ENCODE measurements at regions of chr18 and their contacts with region 1.

Region 1: GRCh38 chr18:36095936-36096519 is 28.7 kb upstream of the RPRD1A start:
- DNase-seq: peak; percentile 41 to 74 (median 52)
- ATAC-seq: peak; percentile 67
- H3K4me3 ChIP-seq: no peak overlapping the region
- H3K27ac ChIP-seq: no peak overlapping the region
- H3K4me1 ChIP-seq: no peaks in the 10 kb centered on the region; a peak in 1 of 5 replicates
- H3K27me3 ChIP-seq: peaks cover 5 to 8% of the 10 kb centered on the region in 2 experiments; a peak in 3 of 5 replicates
- CTCF ChIP-seq: peak; percentile 38 to 88 (median 57); a peak in 3 of 6 replicates
- EP300 ChIP-seq: no peak
- POLR2A ChIP-seq: no peak
- RAD21 ChIP-seq: peak; percentile 89 to 95

Region 2: GRCh38 chr18:36015629-36016028 is 80.4 kb before region 1 on chr18:
- CTCF ChIA-PET with region 1: no interaction called
- POLR2A ChIA-PET with region 1: no interaction called
- in situ Hi-C with region 1: no loop called
- intact Hi-C with region 1: loop called (anchors 1 kb)
- DNase-seq: no peak
- ATAC-seq: no peak
- H3K4me3 ChIP-seq: no peak overlapping the region
- H3K27ac ChIP-seq: no peak overlapping the region
- H3K4me1 ChIP-seq: no peaks in the 10 kb centered on the region
- H3K27me3 ChIP-seq: no peaks in the 10 kb centered on the region
- CTCF ChIP-seq: no peak
- EP300 ChIP-seq: no peak
- POLR2A ChIP-seq: no peak
- RAD21 ChIP-seq: no peak

Region 3: GRCh38 chr18:36411745-36412168 is 315.7 kb after region 1 on chr18:
- CTCF ChIA-PET with region 1: no interaction called
- POLR2A ChIA-PET with region 1: no interaction called
- in situ Hi-C with region 1: no loop called
- intact Hi-C with region 1: loop called (anchors 5 kb)
- DNase-seq: peak; percentile 46 to 58 (median 48)
- ATAC-seq: peak; percentile 93
- H3K4me3 ChIP-seq: no peak overlapping the region
- H3K27ac ChIP-seq: no peak overlapping the region
- H3K4me1 ChIP-seq: no peaks in the 10 kb centered on the region
- H3K27me3 ChIP-seq: peaks cover 0 to 21% of the 10 kb centered on the region in 2 experiments; a peak in 1 of 5 replicates
- CTCF ChIP-seq: peak; percentile 68 to 90 (median 70)
- EP300 ChIP-seq: no peak
- POLR2A ChIP-seq: no peak
- RAD21 ChIP-seq: peak in 1 of 2 experiments; percentile 54; a peak in 2 of 4 replicates

Region 4: DNA sequence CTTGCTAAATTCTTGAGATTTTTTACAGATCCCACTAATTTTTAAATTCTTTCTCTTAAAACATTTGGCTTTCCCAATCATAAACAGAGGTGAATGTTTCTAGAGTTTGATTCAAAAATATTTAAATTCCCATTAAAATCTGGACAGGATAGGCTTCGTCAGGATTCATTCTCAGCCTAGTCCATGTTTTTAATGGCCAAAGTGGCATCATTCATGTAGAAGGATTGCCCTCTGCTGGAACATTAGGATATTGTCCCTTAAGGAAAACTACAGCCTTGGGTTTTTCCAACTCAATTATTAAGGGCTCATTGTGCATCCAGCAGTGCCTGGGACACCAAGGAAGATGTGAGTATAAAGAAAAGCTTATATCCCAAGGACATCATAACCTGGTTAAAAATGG is 661.1 kb after region 1 on chr18:
- CTCF ChIA-PET with region 1: interaction called, 7 read pairs
- POLR2A ChIA-PET with region 1: no interaction called
- in situ Hi-C with region 1: loop called (anchors 10 kb)
- intact Hi-C with region 1: loop called (anchors 1 kb)
- DNase-seq: peak; percentile 55 to 59 (median 58)
- ATAC-seq: peak; percentile 76
- H3K4me3 ChIP-seq: no peak overlapping the region
- H3K27ac ChIP-seq: no peak overlapping the region
- H3K4me1 ChIP-seq: peaks cover 4 to 6% of the 10 kb centered on the region in 2 experiments; a peak in 4 of 5 replicates
- H3K27me3 ChIP-seq: peaks cover 29 to 33% of the 10 kb centered on the region in 2 experiments
- CTCF ChIP-seq: peak; percentile 60 to 88 (median 70)
- EP300 ChIP-seq: no peak
- POLR2A ChIP-seq: no peak
- RAD21 ChIP-seq: peak; percentile 76 to 89

Measured in K562 (cell line).